ENCODE measurements at regions of chr22 and their contacts with region 1.

Region 1: DNA sequence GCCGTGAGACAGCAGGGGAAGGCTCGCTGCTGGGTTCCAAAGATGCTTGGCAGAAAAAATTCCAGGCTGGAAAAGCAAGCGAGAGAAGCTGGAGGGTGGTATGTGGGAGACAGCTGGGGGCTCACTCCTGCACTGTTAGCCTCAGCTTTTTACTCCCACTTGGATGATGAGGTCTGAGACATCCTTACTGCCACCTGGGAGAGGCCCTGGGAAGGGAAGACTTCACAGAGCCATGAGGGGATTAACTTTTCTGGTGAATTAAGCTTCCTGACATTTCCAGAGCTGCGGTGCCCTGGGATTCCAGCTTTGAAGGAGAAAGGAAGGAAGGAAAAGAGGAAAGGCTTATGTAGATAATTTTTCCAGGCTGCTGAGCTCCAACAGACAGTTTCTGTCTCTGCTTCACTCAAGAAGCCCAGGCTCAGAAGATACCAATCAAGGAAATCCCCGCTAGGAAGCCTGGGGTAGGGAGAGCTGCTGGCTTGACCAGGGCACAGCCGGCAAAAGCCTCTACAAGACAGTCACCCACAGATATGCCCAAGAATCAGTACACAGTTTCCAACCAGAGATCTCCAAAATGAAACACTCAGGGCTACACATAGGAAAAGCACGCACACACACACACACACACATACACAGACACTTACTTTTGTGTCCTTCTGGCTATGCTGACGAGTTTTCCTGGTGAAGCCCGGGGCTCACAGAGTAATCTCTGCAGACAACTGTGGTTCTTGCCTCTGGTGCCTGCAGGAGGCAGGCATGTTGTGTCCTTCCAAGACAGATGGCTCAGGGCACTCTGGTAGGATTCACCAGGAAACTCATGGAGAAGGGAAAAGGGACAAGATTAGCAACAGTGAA is 907 bp downstream of the MCHR1 start:
- DNase-seq: no peak
- ATAC-seq: no peak
- H3K4me3 ChIP-seq: no peak overlapping the region
- H3K4me3 Mint-ChIP-seq: no peak overlapping the region
- H3K27ac ChIP-seq: no peak overlapping the region
- H3K27ac Mint-ChIP-seq: no peak overlapping the region
- H3K4me1 ChIP-seq: peaks cover 29% of the 10 kb centered on the region
- H3K4me1 Mint-ChIP-seq: peaks cover 14% of the 10 kb centered on the region
- H3K27me3 ChIP-seq: peaks cover 0 to 18% of the 10 kb centered on the region in 2 experiments
- H3K27me3 Mint-ChIP-seq: peaks cover 26% of the 10 kb centered on the region
- CTCF ChIP-seq: no peak

Region 2: DNA sequence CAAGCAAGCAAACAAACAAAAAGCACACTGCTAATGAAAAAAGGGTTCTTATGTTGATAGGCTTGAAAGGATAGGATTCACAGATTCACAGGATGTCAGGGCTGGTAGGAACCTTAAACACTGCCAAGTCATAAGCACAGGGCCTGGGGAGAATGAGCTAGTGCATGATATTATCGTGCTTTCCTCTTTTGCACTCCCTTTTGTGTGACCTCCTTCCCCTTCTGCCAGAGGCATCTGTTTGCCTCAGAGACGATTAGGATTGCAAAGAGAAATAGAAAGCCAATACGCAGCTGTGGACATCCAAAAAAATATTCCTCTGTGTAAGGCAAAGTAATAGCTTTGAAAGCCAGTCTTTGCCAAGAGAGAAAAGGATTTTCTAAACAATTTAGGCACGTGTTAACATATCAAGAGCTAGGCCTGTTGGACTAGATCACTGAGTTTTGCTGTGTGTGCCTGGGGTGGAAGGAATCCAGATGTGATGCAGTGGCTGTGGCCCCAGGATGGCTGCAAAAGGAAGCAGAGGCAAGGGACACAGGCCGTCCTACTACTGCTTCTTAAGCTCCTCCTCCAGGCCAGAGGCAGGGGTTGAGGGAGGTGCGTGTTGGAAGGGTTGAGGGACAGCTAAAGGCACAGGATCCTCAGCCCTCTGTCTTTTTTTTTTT is 29.7 kb after region 1 on chr22:
- CTCF ChIA-PET with region 1: interaction called, 17 read pairs
- POLR2A ChIA-PET with region 1: interaction called, 4 read pairs
- intact Hi-C with region 1: no loop called
- DNase-seq: no peak
- ATAC-seq: no peak
- H3K4me3 ChIP-seq: no peak overlapping the region
- H3K4me3 Mint-ChIP-seq: no peak overlapping the region
- H3K27ac ChIP-seq: no peak overlapping the region
- H3K27ac Mint-ChIP-seq: no peak overlapping the region
- H3K4me1 ChIP-seq: peaks cover 15% of the 10 kb centered on the region
- H3K4me1 Mint-ChIP-seq: peaks cover 16% of the 10 kb centered on the region
- H3K27me3 ChIP-seq: no peaks in the 10 kb centered on the region
- H3K27me3 Mint-ChIP-seq: no peaks in the 10 kb centered on the region
- CTCF ChIP-seq: no peak

Region 3: DNA sequence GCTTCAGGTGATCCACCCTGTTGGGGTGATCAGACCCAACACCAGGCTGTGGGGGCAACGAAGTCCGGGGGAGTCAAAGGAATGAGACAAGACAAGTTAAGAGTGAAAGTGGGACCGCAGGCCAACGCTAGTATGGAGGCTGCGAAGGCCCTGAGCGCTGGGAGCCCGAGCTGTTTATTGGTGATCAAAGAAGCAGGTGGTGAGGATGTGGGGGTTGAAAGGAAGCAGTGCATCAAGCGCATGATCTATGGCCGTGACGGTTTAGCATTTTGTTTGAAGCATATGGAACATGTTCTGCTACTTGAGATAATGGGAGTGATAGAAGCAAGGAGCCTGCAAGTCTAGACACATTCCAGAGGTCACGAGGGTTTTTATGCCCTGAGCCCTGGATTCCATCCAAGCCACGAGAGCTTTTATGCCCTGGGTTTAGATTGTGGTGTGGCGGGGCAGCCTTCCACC is 48.6 kb after region 1 on chr22:
- CTCF ChIA-PET with region 1: interaction called, 8 read pairs
- POLR2A ChIA-PET with region 1: interaction called, 8 read pairs
- intact Hi-C with region 1: loop called in 1 of 2 experiments (anchors 2 kb)
- DNase-seq: peak; percentile 58 to 86 (median 70)
- ATAC-seq: peak; percentile 61
- H3K4me3 ChIP-seq: no peak overlapping the region
- H3K4me3 Mint-ChIP-seq: peak overlapping the region; percentile 73
- H3K27ac ChIP-seq: peak overlapping the region; percentile 64 to 71
- H3K27ac Mint-ChIP-seq: peak overlapping the region; percentile 93
- H3K4me1 ChIP-seq: peaks cover 72% of the 10 kb centered on the region
- H3K4me1 Mint-ChIP-seq: peaks cover 64% of the 10 kb centered on the region
- H3K27me3 ChIP-seq: no peaks in the 10 kb centered on the region
- H3K27me3 Mint-ChIP-seq: no peaks in the 10 kb centered on the region
- CTCF ChIP-seq: no peak

Region 4: DNA sequence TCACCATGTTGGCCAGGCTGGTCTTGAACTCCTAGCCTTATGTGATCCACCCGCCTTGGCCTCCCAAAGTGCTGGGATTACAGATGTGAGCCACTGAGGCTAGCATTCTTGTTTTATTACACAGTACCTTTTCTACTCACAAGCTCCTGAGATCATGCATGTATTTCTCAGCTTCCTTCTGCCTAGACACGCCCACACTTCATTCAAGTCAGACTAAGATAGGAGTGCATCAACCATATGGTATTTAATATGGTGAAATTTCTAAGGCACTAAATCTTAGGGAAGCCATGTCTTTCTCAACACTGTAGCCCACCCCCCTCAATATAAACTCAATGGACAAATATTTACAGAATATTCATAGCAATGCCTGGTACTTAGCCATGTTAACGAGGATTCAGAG is 76.9 kb after region 1 on chr22:
- CTCF ChIA-PET with region 1: interaction called, 64 read pairs
- POLR2A ChIA-PET with region 1: interaction called, 39 read pairs
- intact Hi-C with region 1: loop called (anchors 1 kb)
- DNase-seq: no peak
- ATAC-seq: no peak
- H3K4me3 ChIP-seq: no peak overlapping the region
- H3K4me3 Mint-ChIP-seq: no peak overlapping the region
- H3K27ac ChIP-seq: no peak overlapping the region
- H3K27ac Mint-ChIP-seq: no peak overlapping the region
- H3K4me1 ChIP-seq: no peaks in the 10 kb centered on the region
- H3K4me1 Mint-ChIP-seq: peaks cover 6% of the 10 kb centered on the region
- H3K27me3 ChIP-seq: no peaks in the 10 kb centered on the region
- H3K27me3 Mint-ChIP-seq: no peaks in the 10 kb centered on the region
- CTCF ChIP-seq: no peak

Region 5: DNA sequence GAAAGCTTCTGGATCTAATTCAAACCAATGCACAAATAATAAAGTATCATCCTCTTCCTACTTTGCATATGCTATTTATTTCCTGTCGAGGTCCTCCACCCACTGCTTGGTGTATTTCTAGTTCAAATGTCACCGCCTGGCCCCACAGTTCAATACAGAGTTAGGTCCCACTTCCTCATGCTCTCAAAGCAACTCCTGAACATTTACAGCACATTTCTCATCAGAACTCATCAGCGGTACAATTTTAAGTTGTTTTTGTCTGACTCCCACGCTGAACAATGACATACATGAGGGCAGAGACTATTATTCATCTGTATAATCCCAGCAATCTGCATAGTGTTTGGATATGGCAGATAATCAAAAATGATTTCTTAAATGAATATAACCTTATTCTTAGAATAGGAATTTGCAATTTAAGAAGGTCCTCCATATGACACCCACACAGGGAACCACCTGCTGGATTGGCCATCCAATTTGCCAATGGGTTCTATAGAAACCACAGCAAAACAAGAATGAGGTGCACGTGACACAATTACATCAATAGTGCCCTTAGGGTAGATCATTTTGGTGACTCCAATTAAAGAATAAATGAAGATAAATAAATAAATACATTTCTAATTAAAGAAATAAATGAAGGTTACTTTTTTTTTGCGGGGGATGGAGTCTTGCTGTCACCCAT is 84.7 kb after region 1 on chr22:
- CTCF ChIA-PET with region 1: interaction called, 64 read pairs
- POLR2A ChIA-PET with region 1: interaction called, 39 read pairs
- intact Hi-C with region 1: loop called (anchors 1 kb)
- DNase-seq: peak in 10 of 14 experiments; percentile 5 to 65 (median 26)
- ATAC-seq: peak; percentile 81
- H3K4me3 ChIP-seq: no peak overlapping the region
- H3K4me3 Mint-ChIP-seq: peak overlapping the region; percentile 25
- H3K27ac ChIP-seq: peak overlapping the region; percentile 57 to 69
- H3K27ac Mint-ChIP-seq: peak overlapping the region; percentile 84
- H3K4me1 ChIP-seq: peaks cover 19% of the 10 kb centered on the region
- H3K4me1 Mint-ChIP-seq: peaks cover 23% of the 10 kb centered on the region
- H3K27me3 ChIP-seq: no peaks in the 10 kb centered on the region
- H3K27me3 Mint-ChIP-seq: no peaks in the 10 kb centered on the region
- CTCF ChIP-seq: no peak

Region 6: GRCh38 chr22:40856513-40857308 is 176.5 kb after region 1 on chr22 and contains the starts of genes ST13 and XPNPEP3:
- CTCF ChIA-PET with region 1: interaction called, 5 read pairs
- POLR2A ChIA-PET with region 1: interaction called, 6 read pairs
- intact Hi-C with region 1: loop called in 1 of 2 experiments (anchors 2 kb)
- DNase-seq: peak; percentile 94 to 99 (median 96)
- ATAC-seq: peak; percentile 86
- H3K4me3 ChIP-seq: peak within 1 kb of the TSS; percentile 96
- H3K4me3 Mint-ChIP-seq: peak within 1 kb of the TSS; percentile 100
- H3K27ac ChIP-seq: peak within 1 kb of the TSS; percentile 95 to 99
- H3K27ac Mint-ChIP-seq: peak within 1 kb of the TSS; percentile 100
- H3K4me1 ChIP-seq: peaks cover 22% of the 10 kb centered on the region
- H3K4me1 Mint-ChIP-seq: peaks cover 80% of the 10 kb centered on the region
- H3K27me3 ChIP-seq: no peaks in the 10 kb centered on the region
- H3K27me3 Mint-ChIP-seq: no peaks in the 10 kb centered on the region
- CTCF ChIP-seq: peak; percentile 38
- total RNA-seq, gene ST13: 164 to 170 TPM
- total RNA-seq, gene XPNPEP3: 16.3 to 17.9 TPM

Region 7: DNA sequence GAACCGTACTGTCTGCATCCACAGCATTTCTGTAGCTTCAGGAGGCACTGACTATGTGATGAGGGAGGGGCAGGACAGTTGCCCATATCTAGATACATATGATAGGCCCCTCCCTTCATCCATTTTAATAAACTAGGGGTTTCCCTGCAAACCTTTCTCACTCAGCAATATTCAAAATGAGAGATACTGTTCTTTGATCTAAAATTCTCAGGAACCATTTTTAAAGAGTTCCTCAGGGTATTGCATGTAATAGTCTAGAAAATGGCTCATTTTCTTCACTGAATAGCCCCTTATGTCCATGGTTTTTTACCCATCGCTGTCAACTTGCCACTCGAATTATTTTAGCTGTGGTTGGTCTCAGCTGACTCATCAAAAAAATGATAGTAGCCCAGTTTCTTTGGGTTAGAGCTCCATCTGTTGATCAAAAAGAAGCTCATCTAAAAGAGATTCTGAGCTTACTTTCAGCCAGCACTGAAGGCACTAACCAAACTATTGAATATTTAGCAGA is 218.7 kb after region 1 on chr22:
- CTCF ChIA-PET with region 1: interaction called, 10 read pairs
- POLR2A ChIA-PET with region 1: no interaction called
- intact Hi-C with region 1: loop called (anchors 1 to 2 kb)
- DNase-seq: peak in 4 of 14 experiments; percentile 4 to 73 (median 68)
- ATAC-seq: peak; percentile 60
- H3K4me3 ChIP-seq: no peak overlapping the region
- H3K4me3 Mint-ChIP-seq: no peak overlapping the region
- H3K27ac ChIP-seq: no peak overlapping the region
- H3K27ac Mint-ChIP-seq: no peak overlapping the region
- H3K4me1 ChIP-seq: peaks cover 3% of the 10 kb centered on the region
- H3K4me1 Mint-ChIP-seq: peaks cover 6% of the 10 kb centered on the region
- H3K27me3 ChIP-seq: no peaks in the 10 kb centered on the region
- H3K27me3 Mint-ChIP-seq: no peaks in the 10 kb centered on the region
- CTCF ChIP-seq: peak; percentile 54